Breast epithelium (tissue), 4 donors: ENCODE measurements at regions of chr15 and their contacts with region 1.

Region 1: GRCh38 chr15:36831125-36831903 is 251.9 kb downstream of the CDIN1 start:
- DNase-seq: no peak
- H3K4me3 ChIP-seq: no peak overlapping the region
- H3K27ac ChIP-seq: no peak overlapping the region
- H3K4me1 ChIP-seq: no peaks in the 10 kb centered on the region
- H3K27me3 ChIP-seq: no peaks in the 10 kb centered on the region
- CTCF ChIP-seq: no peak
- POLR2A ChIP-seq: no peak

Region 2: GRCh38 chr15:35540885-35541284 is 1290.4 kb before region 1 on chr15:
- intact Hi-C with region 1: no loop called
- DNase-seq: no peak
- H3K4me3 ChIP-seq: no peak overlapping the region
- H3K27ac ChIP-seq: no peak overlapping the region
- H3K4me1 ChIP-seq: peaks cover 0 to 6% of the 10 kb centered on the region in 2 donors
- H3K27me3 ChIP-seq: no peaks in the 10 kb centered on the region
- CTCF ChIP-seq: no peak
- POLR2A ChIP-seq: no peak

Region 3: DNA sequence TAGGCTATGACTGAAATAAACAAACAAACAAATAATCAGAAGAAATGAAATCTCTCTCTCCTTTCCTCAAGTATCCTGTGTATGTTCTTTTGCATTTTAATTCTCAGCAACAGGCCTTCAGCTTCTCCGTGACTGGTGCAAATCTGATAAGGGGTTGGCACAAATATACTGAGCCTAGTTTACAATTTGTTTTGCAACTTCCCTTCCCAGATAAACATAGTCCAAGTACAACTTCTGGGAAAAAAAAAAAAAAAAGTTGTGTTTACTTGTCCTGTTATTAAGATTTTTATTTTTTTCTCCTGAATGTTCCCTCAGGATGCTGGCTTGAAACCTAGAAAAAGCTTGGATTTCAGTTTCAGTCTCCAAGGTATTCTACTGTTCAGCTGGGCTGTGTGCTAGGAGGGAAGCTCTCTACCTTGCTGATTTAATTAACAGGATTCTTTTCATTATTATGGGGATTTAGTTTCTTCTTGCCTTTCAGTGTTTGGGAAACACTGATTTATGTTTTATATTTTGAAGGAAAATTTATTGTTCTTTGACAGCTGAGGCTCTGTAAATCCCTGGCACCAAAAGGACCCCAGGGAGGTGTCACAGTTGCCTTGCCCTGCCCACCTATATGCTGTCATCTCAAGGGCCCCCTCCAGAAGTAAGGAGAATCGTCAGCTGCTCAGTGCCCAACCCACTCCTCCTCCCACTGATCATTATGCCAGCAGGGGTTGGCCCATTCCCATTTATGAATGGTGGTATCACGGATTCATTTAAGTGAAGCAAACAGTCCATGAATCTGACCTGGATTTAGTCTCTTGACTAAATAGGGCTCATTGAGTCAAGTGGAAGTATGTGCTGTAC is 83.9 kb after region 1 on chr15:
- intact Hi-C with region 1: loop called (anchors 5 kb)
- DNase-seq: no peak
- H3K4me3 ChIP-seq: no peak overlapping the region
- H3K27ac ChIP-seq: peak overlapping the region; percentile 3 to 60
- H3K4me1 ChIP-seq: no peaks in the 10 kb centered on the region
- H3K27me3 ChIP-seq: no peaks in the 10 kb centered on the region
- CTCF ChIP-seq: no peak
- POLR2A ChIP-seq: no peak